Mammary epithelial cell (primary cell): ENCODE measurements at regions of chr22 and their contacts with region 1.

Region 1: GRCh38 chr22:42270512-42271417 is at the start of gene TCF20:
- DNase-seq: peak; percentile 70
- H3K4me3 ChIP-seq: peak within 1 kb of the TSS; percentile 82 to 97 (median 89)
- H3K27ac ChIP-seq: peak within 1 kb of the TSS; percentile 78
- H3K4me1 ChIP-seq: peaks cover 16% of the 10 kb centered on the region
- H3K27me3 ChIP-seq: no peaks in the 10 kb centered on the region
- CTCF ChIP-seq: peak in 1 of 2 donors; percentile 6
- total RNA-seq, gene TCF20: 49.2 to 62.5 TPM

Region 2: GRCh38 chr22:41983513-41984405 is 287.0 kb before region 1 on chr22:
- CTCF ChIA-PET with region 1: no interaction called
- dilution Hi-C with region 1: no loop called
- in situ Hi-C with region 1: no loop called
- intact Hi-C with region 1: no loop called
- DNase-seq: peak; percentile 57
- H3K4me3 ChIP-seq: no peak overlapping the region
- H3K27ac ChIP-seq: no peak overlapping the region
- H3K4me1 ChIP-seq: peaks cover 11% of the 10 kb centered on the region
- H3K27me3 ChIP-seq: no peaks in the 10 kb centered on the region
- CTCF ChIP-seq: no peak

Region 3: GRCh38 chr22:42160830-42161696 is 109.7 kb before region 1 on chr22:
- CTCF ChIA-PET with region 1: no interaction called
- dilution Hi-C with region 1: no loop called
- in situ Hi-C with region 1: no loop called
- intact Hi-C with region 1: loop called (anchors 2 kb)
- DNase-seq: no peak
- H3K4me3 ChIP-seq: no peak overlapping the region
- H3K27ac ChIP-seq: no peak overlapping the region
- H3K4me1 ChIP-seq: peaks cover 36% of the 10 kb centered on the region
- H3K27me3 ChIP-seq: no peaks in the 10 kb centered on the region
- CTCF ChIP-seq: no peak

Region 4: DNA sequence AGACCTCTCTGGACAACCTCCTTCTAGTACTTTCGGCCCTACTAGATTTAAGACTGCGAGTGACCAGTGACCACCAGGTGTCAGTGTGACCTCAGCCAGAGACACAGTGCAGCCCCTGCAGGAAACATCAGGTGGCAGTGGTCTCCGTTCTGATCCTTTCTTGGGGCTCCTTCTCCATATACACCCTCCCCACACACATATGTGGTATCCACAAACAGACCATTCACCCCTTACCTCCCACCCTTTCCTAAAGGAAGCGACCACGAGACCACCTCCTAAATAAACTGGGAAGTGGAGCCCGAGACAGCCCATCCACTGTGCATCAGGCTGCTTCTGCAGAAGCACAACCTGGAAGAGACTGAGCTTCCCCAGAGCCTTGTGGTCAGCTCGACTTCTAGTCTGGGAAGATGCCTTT is 101.7 kb before region 1 on chr22:
- CTCF ChIA-PET with region 1: no interaction called
- dilution Hi-C with region 1: no loop called
- in situ Hi-C with region 1: no loop called
- intact Hi-C with region 1: loop called (anchors 2 kb)
- DNase-seq: peak; percentile 17
- H3K4me3 ChIP-seq: no peak overlapping the region
- H3K27ac ChIP-seq: no peak overlapping the region
- H3K4me1 ChIP-seq: peaks cover 20% of the 10 kb centered on the region
- H3K27me3 ChIP-seq: no peaks in the 10 kb centered on the region
- CTCF ChIP-seq: peak; percentile 70 to 77

Region 5: DNA sequence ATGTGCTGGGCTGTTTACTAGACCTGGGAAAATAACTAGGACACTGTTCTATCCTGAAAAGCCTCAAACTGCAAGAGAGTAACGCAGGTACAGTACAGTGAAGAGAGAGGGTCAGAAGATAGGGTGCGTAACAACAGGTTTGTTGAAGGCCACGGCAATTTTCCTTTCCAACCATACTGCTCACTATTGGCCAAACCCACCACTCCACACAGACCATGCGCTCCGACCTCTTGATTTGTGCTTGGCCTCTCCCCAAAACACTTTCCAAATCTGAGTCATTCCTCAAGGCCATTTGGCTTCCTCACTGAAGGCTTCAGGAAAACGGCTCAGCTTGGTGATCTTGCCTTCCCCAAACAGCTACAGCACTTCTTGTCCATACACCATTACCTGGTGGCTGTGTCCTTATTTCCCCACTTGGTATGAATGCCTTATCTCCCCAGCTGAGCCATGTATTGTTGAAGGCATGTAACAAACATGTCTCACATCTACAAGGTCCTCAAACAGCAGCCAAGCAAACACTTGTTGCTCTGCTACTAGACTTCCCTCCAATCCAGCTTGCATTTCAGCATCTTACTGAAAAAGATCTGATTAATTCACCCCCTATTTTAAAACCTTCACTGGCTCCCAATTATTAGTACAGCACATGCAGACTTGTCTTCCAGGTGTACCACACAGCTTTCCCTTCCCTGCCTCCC is 41.2 kb before region 1 on chr22:
- CTCF ChIA-PET with region 1: interaction called, 3 read pairs
- dilution Hi-C with region 1: no loop called
- in situ Hi-C with region 1: no loop called
- intact Hi-C with region 1: loop called (anchors 5 kb)
- DNase-seq: peak; percentile 2
- H3K4me3 ChIP-seq: no peak overlapping the region
- H3K27ac ChIP-seq: no peak overlapping the region
- H3K4me1 ChIP-seq: peaks cover 10% of the 10 kb centered on the region
- H3K27me3 ChIP-seq: no peaks in the 10 kb centered on the region
- CTCF ChIP-seq: no peak

Region 6: DNA sequence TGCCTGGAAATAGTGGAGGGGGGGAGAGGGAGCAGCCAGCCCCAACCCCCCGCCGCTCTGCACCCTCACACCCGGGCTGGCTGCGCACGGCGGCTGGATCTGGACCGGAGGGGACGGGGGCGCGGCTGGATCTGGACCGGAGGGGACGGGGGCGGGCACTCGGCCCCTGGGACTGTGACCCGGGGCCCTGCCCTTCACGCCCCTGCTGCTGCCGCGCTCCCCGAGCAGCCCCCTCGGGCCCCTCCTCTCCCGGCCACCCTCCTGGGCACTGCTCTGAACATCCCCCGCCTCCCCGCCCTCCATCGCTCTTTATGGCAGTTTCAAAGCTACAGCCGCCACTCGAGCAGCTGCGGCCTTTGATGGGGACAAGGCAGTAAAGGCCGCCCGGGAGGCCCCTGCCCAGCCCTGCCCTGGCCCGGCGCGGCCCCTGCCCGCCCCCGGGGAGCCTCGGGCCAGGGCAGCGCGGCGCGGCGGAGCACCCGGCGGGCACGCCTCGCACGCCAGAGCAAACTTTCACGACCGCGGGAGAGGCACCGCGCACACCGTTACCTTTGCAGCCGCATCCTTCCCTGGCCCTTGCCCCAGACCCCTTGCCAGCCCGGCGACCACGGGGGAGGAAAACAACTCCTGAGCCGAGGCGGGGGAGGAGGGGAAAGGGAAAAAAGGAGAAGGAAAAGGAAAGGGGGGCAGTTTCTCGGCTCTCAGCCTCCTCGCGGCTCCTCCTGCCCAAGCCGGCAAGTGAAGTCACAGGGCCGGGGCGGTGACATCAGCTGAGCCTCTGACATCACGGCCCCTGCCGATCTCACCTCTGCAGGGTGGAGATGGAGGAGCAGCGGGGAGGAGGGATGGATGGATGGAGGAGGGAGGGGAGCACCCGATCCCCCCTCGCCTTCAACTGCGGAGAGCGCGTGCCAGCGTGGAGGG is 12.8 kb after region 1 on chr22:
- CTCF ChIA-PET with region 1: no interaction called
- dilution Hi-C with region 1: no loop called
- in situ Hi-C with region 1: no loop called
- intact Hi-C with region 1: no loop called
- DNase-seq: no peak
- H3K4me3 ChIP-seq: peak overlapping the region in 2 of 3 experiments; percentile 30 to 36
- H3K27ac ChIP-seq: no peak overlapping the region
- H3K4me1 ChIP-seq: peaks cover 2% of the 10 kb centered on the region
- H3K27me3 ChIP-seq: peaks cover 10% of the 10 kb centered on the region
- CTCF ChIP-seq: no peak

Region 7: DNA sequence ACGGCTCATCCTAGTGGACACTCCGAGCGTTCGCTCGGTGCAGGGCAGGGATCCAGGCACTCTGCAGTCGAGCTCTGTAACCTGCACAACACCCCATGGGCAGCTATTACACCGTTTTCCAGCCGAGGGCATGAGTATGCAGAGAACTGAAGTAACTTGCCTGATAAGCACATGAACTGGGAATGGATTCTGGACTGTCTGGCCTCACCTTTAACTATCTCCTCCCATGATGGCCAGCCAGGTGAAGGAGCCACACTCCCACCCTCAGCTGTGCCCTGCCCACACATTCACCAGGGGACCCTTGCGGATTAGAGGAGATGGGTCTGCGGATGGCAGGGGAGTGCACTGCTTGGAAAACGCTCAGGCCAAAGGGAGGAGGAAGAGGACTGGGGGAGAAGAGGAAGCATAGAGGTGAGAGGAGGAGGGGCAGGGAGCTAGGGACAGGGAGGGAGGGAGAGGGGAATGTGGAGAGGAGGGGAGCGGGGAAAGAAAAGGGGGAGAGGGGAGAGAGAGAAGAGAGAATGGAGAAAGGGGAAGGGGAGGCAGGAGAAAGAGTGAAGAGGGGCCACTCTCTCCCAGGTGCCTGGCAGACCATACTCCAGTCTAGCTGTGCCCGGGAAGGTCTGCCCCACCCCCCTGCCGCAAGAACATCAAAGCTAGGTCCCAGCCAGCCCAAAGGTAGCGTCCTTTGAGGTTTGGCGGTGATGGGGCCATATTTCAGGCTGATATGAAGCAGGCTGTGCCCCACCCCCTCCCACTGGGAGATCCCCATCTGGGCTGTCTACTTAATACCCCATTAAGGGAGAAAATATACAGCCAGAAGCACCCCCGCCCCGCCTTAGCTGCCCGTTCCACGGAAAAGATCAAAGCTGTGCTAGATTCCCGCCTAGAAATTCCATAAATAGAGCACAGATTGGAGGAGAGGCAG is 32.9 kb after region 1 on chr22:
- CTCF ChIA-PET with region 1: no interaction called
- dilution Hi-C with region 1: no loop called
- in situ Hi-C with region 1: no loop called
- intact Hi-C with region 1: no loop called
- DNase-seq: no peak
- H3K4me3 ChIP-seq: no peak overlapping the region
- H3K27ac ChIP-seq: no peak overlapping the region
- H3K4me1 ChIP-seq: peaks cover 12% of the 10 kb centered on the region
- H3K27me3 ChIP-seq: no peaks in the 10 kb centered on the region
- CTCF ChIP-seq: no peak

Region 8: GRCh38 chr22:42432020-42432596 is 161.3 kb after region 1 on chr22 and contains the start of gene NFAM1:
- CTCF ChIA-PET with region 1: no interaction called
- dilution Hi-C with region 1: no loop called
- in situ Hi-C with region 1: no loop called
- intact Hi-C with region 1: loop called (anchors 2 kb)
- DNase-seq: no peak
- H3K4me3 ChIP-seq: no peak within 1 kb of the TSS
- H3K27ac ChIP-seq: no peak within 1 kb of the TSS
- H3K4me1 ChIP-seq: peaks cover 21% of the 10 kb centered on the region
- H3K27me3 ChIP-seq: no peaks in the 10 kb centered on the region
- CTCF ChIP-seq: no peak
- total RNA-seq, gene NFAM1: 0.17 TPM in 1 of 2 donors, not detected in the other